Mammary epithelial cell (primary cell): ENCODE measurements at regions of chr16 and their contacts with region 1.

Region 1: GRCh38 chr16:66740010-66740409 is 11.4 kb downstream of the DYNC1LI2 start:
- DNase-seq: peak; percentile 23
- H3K4me3 ChIP-seq: no peak overlapping the region
- H3K27ac ChIP-seq: no peak overlapping the region
- H3K4me1 ChIP-seq: peaks cover 34% of the 10 kb centered on the region
- H3K27me3 ChIP-seq: no peaks in the 10 kb centered on the region
- CTCF ChIP-seq: peak; percentile 59 to 72

Region 2: GRCh38 chr16:66562407-66562806 is 177.6 kb before region 1 on chr16:
- CTCF ChIA-PET with region 1: no interaction called
- dilution Hi-C with region 1: no loop called
- in situ Hi-C with region 1: no loop called
- intact Hi-C with region 1: loop called (anchors 1 kb)
- DNase-seq: no peak
- H3K4me3 ChIP-seq: no peak overlapping the region
- H3K27ac ChIP-seq: no peak overlapping the region
- H3K4me1 ChIP-seq: no peaks in the 10 kb centered on the region
- H3K27me3 ChIP-seq: no peaks in the 10 kb centered on the region
- CTCF ChIP-seq: peak in 1 of 2 donors; percentile 38

Region 3: DNA sequence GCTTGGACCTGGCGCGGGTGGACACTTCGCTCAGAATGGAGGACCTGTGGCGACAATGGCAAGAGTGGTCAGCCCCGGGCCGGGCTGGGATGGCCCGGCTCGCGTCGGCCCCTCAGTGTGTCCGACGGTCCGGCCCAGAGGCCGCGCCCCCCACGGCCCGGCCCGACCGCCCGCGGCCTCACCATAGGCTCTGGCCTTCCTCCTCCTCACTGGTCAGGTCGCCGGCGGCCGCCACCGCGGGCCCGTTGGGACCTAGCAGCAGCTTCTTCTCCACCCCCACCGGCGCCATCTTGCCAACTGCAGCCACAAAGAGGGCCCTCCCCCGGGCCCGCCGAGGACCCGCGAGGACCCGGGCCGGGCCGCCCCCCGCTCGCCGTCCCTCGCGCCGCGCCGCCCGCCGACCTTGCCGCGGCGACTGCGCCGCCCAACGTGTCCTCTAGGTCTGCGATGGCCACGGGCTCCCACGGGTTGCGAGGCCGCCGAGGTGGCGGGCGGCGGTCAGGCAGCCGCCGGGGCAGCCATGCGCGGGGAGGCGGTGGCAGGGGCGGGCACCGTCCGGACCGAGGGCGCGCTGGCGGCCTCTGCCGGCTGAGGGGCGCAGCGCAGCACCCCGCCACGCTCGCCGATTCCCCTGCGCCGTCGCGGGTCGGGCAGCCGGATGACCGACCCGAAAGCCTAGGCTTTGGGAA is 11.4 kb after region 1 on chr16 and contains the start of gene DYNC1LI2:
- CTCF ChIA-PET with region 1: no interaction called
- dilution Hi-C with region 1: no loop called
- in situ Hi-C with region 1: no loop called
- intact Hi-C with region 1: loop called (anchors 1 kb)
- DNase-seq: peak; percentile 58
- H3K4me3 ChIP-seq: peak within 1 kb of the TSS; percentile 68 to 97 (median 81)
- H3K27ac ChIP-seq: peak within 1 kb of the TSS; percentile 80
- H3K4me1 ChIP-seq: peaks cover 10% of the 10 kb centered on the region
- H3K27me3 ChIP-seq: no peaks in the 10 kb centered on the region
- CTCF ChIP-seq: peak; percentile 57 to 62
- total RNA-seq, gene DYNC1LI2: 90.8 to 127 TPM

Region 4: DNA sequence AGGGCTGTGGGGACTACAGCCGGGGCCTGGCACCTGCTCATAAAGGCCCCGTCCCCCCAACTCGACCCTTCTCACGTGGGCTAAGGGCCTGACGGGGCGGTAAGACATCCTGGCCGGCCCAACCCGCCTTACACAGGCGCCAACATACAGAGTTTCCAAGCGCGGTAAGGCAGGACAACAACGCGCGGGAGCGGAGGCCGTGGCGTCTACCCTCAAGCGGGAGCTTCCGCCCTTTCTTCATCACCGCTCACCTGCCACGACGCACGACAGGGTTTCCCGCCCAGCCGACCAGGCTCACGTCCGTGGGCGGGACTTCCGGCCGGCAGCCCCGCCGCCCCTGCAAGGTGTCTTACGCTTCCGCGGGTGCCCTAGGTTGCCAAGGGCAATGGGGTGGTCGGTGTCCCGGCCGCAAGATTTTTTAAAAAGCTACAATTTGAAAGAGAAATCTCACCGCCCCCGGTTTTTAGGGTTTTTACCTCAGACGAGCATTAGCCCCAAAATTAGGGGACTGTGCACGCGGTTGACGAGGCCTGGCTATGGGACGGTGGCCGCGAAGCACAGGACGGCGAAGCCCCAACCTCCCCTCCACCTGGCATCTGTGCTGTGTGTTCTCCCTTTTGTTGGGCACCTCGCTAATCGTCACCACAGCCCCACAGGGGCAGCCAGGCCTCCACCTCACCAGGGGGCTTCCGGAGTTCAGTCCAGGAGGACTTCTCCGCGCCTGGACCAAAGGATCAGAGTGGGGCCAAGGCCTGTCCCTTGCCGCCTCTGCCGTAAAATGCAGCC is 61.5 kb after region 1 on chr16 and contains the start of gene TERB1:
- CTCF ChIA-PET with region 1: no interaction called
- dilution Hi-C with region 1: loop called (anchors 10 kb)
- in situ Hi-C with region 1: no loop called
- intact Hi-C with region 1: no loop called
- DNase-seq: no peak
- H3K4me3 ChIP-seq: no peak within 1 kb of the TSS
- H3K27ac ChIP-seq: no peak within 1 kb of the TSS
- H3K4me1 ChIP-seq: no peaks in the 10 kb centered on the region
- H3K27me3 ChIP-seq: no peaks in the 10 kb centered on the region
- CTCF ChIP-seq: no peak
- total RNA-seq, gene TERB1: 0.17 TPM in 1 of 2 donors, not detected in the other